ENCODE measurements at regions of chr10 and their contacts with region 1.

Region 1: GRCh38 chr10:4981722-4982471 is 18.7 kb downstream of the AKR1C1 start:
- DNase-seq: peak; percentile 19 to 47
- H3K4me3 ChIP-seq: no peak overlapping the region
- H3K27ac ChIP-seq: no peak overlapping the region
- H3K4me1 ChIP-seq: peaks cover 4 to 7% (median 4%) of the 10 kb centered on the region in 4 experiments; a peak in 6 of 7 replicates
- H3K27me3 ChIP-seq: no peaks in the 10 kb centered on the region
- CTCF ChIP-seq: peak; percentile 20 to 82 (median 69)
- EP300 ChIP-seq: no peak
- POLR2A ChIP-seq: no peak
- RAD21 ChIP-seq: peak; percentile 63 to 74

Region 2: DNA sequence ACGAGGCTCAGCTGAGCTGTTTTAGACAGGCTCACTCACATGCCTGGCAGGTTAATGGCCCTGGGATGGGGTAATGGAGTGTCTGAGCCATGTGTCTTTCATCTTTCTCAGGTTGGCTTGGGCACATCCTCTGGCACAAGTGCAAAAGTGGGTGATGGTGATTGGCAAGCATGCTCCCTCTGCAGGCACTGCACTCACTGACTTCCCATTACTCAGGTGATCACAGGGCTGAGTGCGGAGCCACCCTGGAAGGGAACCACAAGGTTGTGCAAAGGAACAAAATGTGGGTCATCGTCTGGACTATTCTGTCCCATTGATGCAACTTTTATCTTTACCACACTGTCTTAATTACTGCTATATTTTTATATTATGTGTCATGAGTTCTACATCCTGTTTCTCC is 400.0 kb before region 1 on chr10:
- CTCF ChIA-PET with region 1: no interaction called
- POLR2A ChIA-PET with region 1: no interaction called
- DNase-seq: no peak
- H3K4me3 ChIP-seq: no peak overlapping the region
- H3K27ac ChIP-seq: no peak overlapping the region
- H3K4me1 ChIP-seq: no peaks in the 10 kb centered on the region
- H3K27me3 ChIP-seq: no peaks in the 10 kb centered on the region
- CTCF ChIP-seq: no peak
- EP300 ChIP-seq: no peak
- POLR2A ChIP-seq: no peak
- RAD21 ChIP-seq: no peak

Region 3: GRCh38 chr10:4947635-4948596 is 34.0 kb before region 1 on chr10:
- CTCF ChIA-PET with region 1: interaction called, 10 read pairs
- POLR2A ChIA-PET with region 1: no interaction called
- DNase-seq: no peak
- H3K4me3 ChIP-seq: no peak overlapping the region
- H3K27ac ChIP-seq: no peak overlapping the region
- H3K4me1 ChIP-seq: peaks cover 3 to 21% (median 14%) of the 10 kb centered on the region in 4 experiments
- H3K27me3 ChIP-seq: no peaks in the 10 kb centered on the region; a peak in 1 of 7 replicates
- CTCF ChIP-seq: no peak
- EP300 ChIP-seq: no peak
- POLR2A ChIP-seq: no peak
- RAD21 ChIP-seq: no peak

Region 4: DNA sequence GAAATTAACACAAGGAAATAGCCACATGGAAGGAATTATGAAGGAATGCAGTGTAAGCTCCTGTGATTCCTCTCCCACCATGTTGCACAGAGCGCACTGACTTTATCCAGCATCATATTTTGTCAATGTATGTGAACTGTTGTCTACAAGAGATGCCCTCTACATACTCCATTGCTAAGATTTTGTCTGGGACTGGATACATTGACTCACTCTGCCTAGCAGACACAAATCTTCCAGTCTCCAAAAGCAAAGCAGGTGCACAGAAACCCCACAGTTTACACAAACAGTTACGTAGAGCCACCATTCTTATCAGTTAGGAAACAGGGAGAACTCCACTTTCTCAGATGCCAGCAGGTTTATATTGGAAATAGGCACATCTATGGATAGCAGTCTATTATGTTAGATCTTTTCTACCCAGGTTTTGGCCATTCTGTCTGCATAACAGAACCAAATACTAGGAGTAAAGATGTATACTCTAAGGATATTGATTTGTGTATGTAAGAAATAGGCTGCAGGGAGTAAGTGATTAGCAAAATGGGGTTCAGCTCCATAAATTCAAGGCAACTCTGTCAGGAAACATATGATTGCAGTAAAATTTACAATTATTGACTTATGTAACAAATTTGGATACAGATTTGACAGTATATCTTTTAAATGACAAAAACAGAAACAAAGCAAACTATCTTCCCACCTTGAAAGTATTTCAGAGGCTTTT is 20.3 kb after region 1 on chr10:
- CTCF ChIA-PET with region 1: interaction called, 11 read pairs
- POLR2A ChIA-PET with region 1: interaction called, 3 read pairs
- DNase-seq: no peak
- H3K4me3 ChIP-seq: no peak overlapping the region
- H3K27ac ChIP-seq: no peak overlapping the region
- H3K4me1 ChIP-seq: no peaks in the 10 kb centered on the region
- H3K27me3 ChIP-seq: no peaks in the 10 kb centered on the region
- CTCF ChIP-seq: no peak
- EP300 ChIP-seq: no peak
- POLR2A ChIP-seq: no peak
- RAD21 ChIP-seq: no peak